ENCODE measurements at regions of chr1 and their contacts with region 1.

Region 1: DNA sequence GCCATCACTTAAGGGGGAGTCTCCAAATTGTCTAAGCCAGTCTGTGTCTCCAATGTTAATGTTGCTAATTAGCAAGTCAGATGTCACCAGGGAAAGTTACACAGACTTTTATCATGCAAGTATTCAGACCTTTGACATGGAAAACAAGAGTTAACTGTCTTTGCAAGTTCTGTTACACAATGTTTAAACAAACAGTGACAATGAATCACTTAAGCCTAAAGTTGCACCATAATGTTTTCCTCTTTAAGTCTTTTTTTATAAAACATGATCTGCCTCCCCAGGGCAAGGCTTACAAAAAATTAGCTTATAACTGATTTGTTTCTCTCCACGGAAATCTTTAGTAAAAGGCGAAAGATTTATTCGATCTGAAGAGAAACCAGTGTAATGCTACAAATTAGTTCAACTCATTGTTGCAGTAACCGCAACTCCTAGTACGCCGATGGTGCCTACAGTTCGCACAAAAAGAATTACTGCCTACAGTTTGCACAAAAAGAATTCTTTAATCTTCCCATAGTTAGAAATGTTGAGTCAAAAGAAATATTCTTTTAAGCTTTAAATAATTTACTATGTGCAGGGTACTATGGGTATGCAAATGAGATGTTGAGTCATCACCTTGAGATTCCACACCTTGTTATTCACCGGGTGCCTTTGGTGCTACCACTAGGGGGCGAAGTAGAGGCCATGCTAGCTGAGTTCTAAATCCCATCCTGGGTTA is 45.3 kb downstream of the HHAT start:
- DNase-seq: peak; percentile 85 to 100
- H3K4me3 ChIP-seq: peak overlapping the region; percentile 20; the same call in 1 of the 2 replicates
- H3K27ac ChIP-seq: peak overlapping the region; percentile 96
- H3K4me1 ChIP-seq: peaks cover 38% of the 10 kb centered on the region
- H3K27me3 ChIP-seq: no peaks in the 10 kb centered on the region
- CTCF ChIP-seq: peak; percentile 97

Region 2: DNA sequence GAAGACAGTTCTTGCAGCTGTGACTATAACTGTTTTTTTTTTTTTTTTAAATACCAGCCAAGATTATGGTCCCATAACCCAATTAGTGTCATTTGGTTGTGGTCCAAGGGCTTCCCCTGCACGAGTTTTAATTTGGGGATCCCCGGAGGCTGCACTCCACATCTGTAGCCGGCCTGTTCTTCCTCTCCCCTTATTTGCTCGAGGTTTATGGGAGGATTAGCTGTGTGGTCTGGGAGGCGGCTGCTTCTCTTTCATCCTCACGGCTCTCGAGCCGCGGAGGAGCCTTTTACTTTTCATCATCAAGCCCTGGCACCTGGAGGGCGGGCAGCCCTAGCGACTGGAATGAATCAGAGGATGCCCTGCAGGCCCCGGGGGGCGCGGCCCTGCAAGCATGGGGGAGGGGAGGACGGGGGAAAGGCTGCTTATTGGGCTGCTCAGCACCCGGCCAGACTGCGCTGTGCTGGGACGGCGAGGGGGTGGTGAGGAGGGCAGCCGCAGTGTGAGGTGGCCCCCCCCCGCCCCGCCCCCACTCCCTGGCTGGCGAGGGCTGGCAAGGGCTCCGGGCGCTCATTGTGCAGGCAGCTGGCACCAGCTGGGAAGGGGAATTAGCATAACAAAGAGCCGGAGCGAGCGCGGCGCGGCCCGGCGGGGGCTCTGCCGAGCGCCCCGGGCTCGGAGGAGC is 122.9 kb before region 1 on chr1:
- CTCF ChIA-PET with region 1: interaction called, 17 read pairs
- POLR2A ChIA-PET with region 1: no interaction called
- intact Hi-C with region 1: no loop called
- DNase-seq: peak; percentile 81 to 95
- H3K4me3 ChIP-seq: peak overlapping the region; percentile 61
- H3K27ac ChIP-seq: no peak overlapping the region
- H3K4me1 ChIP-seq: peaks cover 30% of the 10 kb centered on the region
- H3K27me3 ChIP-seq: no peaks in the 10 kb centered on the region
- CTCF ChIP-seq: no peak

Region 3: GRCh38 chr1:210360852-210361477 is 13.1 kb before region 1 on chr1:
- CTCF ChIA-PET with region 1: interaction called, 13 read pairs
- POLR2A ChIA-PET with region 1: interaction called, 5 read pairs
- intact Hi-C with region 1: no loop called
- DNase-seq: no peak
- H3K4me3 ChIP-seq: no peak overlapping the region
- H3K27ac ChIP-seq: no peak overlapping the region
- H3K4me1 ChIP-seq: peaks cover under 1% of the 10 kb centered on the region; the same call in 1 of the 2 replicates
- H3K27me3 ChIP-seq: no peaks in the 10 kb centered on the region
- CTCF ChIP-seq: peak; percentile 72

Region 4: DNA sequence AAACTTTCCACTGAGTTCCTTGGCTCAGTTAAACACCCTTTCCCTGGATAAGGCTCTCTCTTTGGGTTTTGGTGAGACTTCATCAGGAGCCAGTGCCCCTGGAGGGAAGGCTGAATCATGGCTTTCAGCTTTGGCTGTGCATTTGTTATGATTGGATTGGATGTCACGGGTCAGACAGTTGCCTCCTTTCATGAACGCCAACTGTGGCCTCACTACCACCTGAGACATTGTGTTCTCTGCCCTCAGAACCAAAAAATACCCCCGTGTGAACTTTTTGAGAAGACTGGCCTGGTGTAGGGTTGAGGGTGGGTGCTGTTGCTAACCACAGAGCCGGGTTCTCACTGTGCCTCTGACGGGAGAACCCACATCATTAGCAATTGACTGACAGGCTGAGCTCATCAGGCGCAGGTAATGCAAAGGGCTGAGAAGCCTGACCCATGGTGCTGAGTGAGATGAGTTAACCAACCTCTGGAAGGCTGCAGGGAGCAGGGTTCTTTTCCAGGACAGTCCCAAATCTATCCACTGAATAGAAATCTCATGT is 20.3 kb after region 1 on chr1:
- CTCF ChIA-PET with region 1: interaction called, 12 read pairs
- POLR2A ChIA-PET with region 1: interaction called, 3 read pairs
- intact Hi-C with region 1: no loop called
- DNase-seq: no peak
- H3K4me3 ChIP-seq: no peak overlapping the region
- H3K27ac ChIP-seq: peak overlapping the region; percentile 57
- H3K4me1 ChIP-seq: peaks cover 18% of the 10 kb centered on the region
- H3K27me3 ChIP-seq: no peaks in the 10 kb centered on the region
- CTCF ChIP-seq: no peak

Region 5: DNA sequence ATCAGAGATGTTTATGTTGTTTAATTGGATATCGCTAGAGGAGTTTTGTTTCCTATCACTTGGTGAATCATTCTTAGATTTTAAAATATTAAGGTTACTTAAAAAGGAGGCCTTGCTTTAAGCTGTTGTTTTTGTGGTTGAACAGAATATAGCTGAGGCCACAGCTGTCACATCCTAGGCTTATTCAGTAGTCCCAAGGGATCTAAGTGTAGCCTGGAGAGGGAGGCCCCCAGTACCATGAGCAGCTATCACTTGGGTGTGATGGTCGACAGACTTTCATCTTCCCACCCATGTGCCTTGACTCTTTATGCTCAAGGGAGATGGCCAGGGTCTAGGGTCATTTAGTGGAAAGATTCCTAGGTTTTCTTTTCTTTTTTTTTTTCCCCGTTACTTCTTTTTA is 233.3 kb after region 1 on chr1:
- CTCF ChIA-PET with region 1: no interaction called
- POLR2A ChIA-PET with region 1: no interaction called
- intact Hi-C with region 1: no loop called
- DNase-seq: no peak
- H3K4me3 ChIP-seq: no peak overlapping the region
- H3K27ac ChIP-seq: no peak overlapping the region
- H3K4me1 ChIP-seq: no peaks in the 10 kb centered on the region
- H3K27me3 ChIP-seq: no peaks in the 10 kb centered on the region
- CTCF ChIP-seq: no peak

Region 6: DNA sequence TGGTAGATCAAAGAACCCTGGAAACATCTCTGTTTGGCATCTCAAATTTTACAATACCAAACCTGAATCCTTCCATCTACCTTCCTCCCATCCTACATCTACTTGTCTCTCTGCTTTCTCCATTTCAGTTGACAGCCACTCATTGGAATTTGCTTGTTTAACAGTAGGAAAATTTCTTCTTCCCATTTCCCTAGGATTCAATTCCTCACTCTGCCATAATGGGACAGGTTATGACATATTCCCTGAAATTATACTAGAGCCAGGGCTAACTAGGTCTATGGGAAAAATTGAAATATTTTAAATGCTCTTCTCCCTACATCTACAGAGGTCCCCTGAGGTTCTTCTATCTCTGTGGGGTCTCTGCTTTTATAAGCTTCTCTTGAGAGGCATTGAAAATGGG is 502.2 kb after region 1 on chr1:
- CTCF ChIA-PET with region 1: no interaction called
- POLR2A ChIA-PET with region 1: interaction called, 10 read pairs
- intact Hi-C with region 1: no loop called
- DNase-seq: no peak
- H3K4me3 ChIP-seq: no peak overlapping the region
- H3K27ac ChIP-seq: no peak overlapping the region
- H3K4me1 ChIP-seq: no peaks in the 10 kb centered on the region
- H3K27me3 ChIP-seq: peaks cover 6% of the 10 kb centered on the region; the same call in 1 of the 2 replicates
- CTCF ChIP-seq: no peak

Region 7: GRCh38 chr1:211724687-211725196 is 1350.7 kb after region 1 on chr1:
- CTCF ChIA-PET with region 1: interaction called, 10 read pairs
- POLR2A ChIA-PET with region 1: no interaction called
- intact Hi-C with region 1: no loop called
- DNase-seq: no peak
- H3K4me3 ChIP-seq: no peak overlapping the region
- H3K27ac ChIP-seq: no peak overlapping the region
- H3K4me1 ChIP-seq: 0 out of 2 replicates have a peak, but pooled peaks cover 4% of the 10 kb centered on the region
- H3K27me3 ChIP-seq: no peaks in the 10 kb centered on the region
- CTCF ChIP-seq: no peak

Measured in PC-9 (cell line).